Natural killer cell (primary cell): ENCODE measurements at regions of chr2 and their contacts with region 1.

Region 1: DNA sequence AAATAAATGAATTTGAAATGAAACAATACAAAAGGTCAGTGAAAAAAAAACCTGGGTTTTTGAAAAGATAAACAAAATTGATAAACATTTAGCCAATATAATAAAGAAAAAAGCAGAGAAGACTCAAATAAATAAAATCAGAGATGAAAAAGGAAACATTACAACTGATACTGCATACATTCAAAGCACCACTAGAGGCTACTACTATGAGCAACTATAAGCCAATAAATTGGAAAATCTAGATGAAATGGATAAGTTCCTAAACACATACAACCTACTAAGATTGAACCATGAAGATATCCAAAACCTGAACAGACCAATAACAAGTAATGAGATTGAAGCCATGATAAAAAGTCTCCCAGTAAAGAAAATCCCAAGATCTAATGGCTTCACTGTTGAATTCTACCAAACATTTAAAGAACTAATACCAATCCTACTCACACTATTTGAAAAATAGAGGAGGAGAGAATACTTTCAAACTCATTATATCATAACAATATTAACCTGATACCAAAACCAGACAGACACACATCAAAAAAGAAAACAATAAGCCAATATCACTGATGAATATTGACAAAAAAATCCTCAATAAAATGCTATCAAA is 80.8 kb upstream of the CERS6 start:
- DNase-seq: no peak
- ATAC-seq: no peak
- H3K4me3 ChIP-seq: no peak overlapping the region
- H3K4me3 Mint-ChIP-seq: no peak overlapping the region
- H3K27ac ChIP-seq: no peak overlapping the region
- H3K27ac Mint-ChIP-seq: no peak overlapping the region
- H3K4me1 ChIP-seq: peaks cover 28% of the 10 kb centered on the region
- H3K4me1 Mint-ChIP-seq: peaks cover 53 to 80% of the 10 kb centered on the region in 2 donors
- H3K27me3 ChIP-seq: no peaks in the 10 kb centered on the region
- H3K27me3 Mint-ChIP-seq: no peaks in the 10 kb centered on the region
- CTCF ChIP-seq: peak; percentile 14

Region 2: GRCh38 chr2:168455648-168456520 is 80.6 kb after region 1 on chr2 and contains the start of gene CERS6:
- intact Hi-C with region 1: loop called (anchors 2 kb)
- DNase-seq: peak; percentile 79 to 81
- ATAC-seq: peak; percentile 96 to 97 (median 96)
- H3K4me3 ChIP-seq: peak within 1 kb of the TSS; percentile 92
- H3K4me3 Mint-ChIP-seq: no peak within 1 kb of the TSS
- H3K27ac ChIP-seq: peak within 1 kb of the TSS; percentile 43
- H3K27ac Mint-ChIP-seq: peak within 1 kb of the TSS in 1 of 2 donors; percentile 27
- H3K4me1 ChIP-seq: peaks cover 15% of the 10 kb centered on the region
- H3K4me1 Mint-ChIP-seq: peaks cover 27% of the 10 kb centered on the region in 2 donors
- H3K27me3 ChIP-seq: no peaks in the 10 kb centered on the region
- H3K27me3 Mint-ChIP-seq: no peaks in the 10 kb centered on the region
- CTCF ChIP-seq: no peak
- total RNA-seq, gene CERS6: 9.1 to 13.5 (median 11.8) TPM

Region 3: DNA sequence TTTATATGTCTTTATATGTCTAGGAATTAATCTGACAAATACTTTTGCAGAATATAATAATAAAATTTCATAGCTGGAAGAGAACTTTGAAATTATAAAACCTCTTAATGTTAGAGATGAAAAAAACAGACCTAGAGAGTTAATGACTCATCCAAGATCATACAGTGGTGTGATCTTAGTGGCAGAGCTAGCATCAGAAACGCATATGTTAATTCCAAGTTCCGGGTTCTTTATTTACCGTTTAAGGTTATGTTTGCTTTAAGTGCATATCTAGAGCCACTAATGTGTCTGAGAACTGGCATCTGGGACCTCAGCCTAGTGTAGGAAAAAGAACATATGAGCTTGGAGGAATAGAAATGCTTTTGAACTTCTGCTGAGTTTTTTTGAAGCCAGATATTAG is 105.1 kb after region 1 on chr2:
- intact Hi-C with region 1: loop called (anchors 10 kb)
- DNase-seq: no peak
- ATAC-seq: no peak
- H3K4me3 ChIP-seq: no peak overlapping the region
- H3K4me3 Mint-ChIP-seq: no peak overlapping the region
- H3K27ac ChIP-seq: no peak overlapping the region
- H3K27ac Mint-ChIP-seq: no peak overlapping the region
- H3K4me1 ChIP-seq: no peaks in the 10 kb centered on the region
- H3K4me1 Mint-ChIP-seq: peaks cover 20 to 42% of the 10 kb centered on the region in 2 donors
- H3K27me3 ChIP-seq: no peaks in the 10 kb centered on the region
- H3K27me3 Mint-ChIP-seq: no peaks in the 10 kb centered on the region
- CTCF ChIP-seq: no peak

Region 4: DNA sequence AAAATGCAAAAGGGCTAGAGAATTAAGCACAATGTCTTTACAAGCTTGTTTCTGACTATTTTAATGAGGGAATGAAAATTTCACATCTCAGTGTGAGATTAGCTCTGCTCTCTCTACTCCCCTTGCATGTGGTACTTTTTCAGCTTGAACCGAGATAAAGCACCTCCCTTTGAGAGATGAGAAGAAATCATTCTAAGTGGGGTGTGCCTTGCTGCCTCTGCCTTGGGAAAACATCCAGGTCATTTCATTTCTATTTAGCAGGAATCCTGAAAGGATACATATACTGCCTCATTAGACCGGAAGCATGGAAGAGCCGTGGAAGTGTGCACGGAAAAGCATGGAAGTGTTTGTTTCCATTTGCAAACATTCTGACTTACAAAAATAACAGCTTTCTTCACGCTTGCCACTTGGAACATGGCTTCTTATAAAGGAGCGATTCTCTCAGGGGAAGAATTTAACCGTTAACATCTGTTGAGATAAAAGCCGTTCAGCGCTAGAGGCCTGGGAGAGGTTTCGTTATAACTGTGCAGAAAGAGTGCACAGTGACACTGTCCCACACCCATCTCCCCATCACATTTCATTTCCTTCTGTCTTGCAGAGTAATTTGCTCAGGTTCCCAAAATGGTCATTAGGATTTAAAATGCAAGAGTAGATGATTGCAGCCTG is 443.9 kb after region 1 on chr2:
- intact Hi-C with region 1: no loop called
- DNase-seq: no peak
- ATAC-seq: no peak
- H3K4me3 ChIP-seq: no peak overlapping the region
- H3K4me3 Mint-ChIP-seq: no peak overlapping the region
- H3K27ac ChIP-seq: no peak overlapping the region
- H3K27ac Mint-ChIP-seq: no peak overlapping the region
- H3K4me1 ChIP-seq: no peaks in the 10 kb centered on the region
- H3K4me1 Mint-ChIP-seq: no peaks in the 10 kb centered on the region
- H3K27me3 ChIP-seq: no peaks in the 10 kb centered on the region
- H3K27me3 Mint-ChIP-seq: no peaks in the 10 kb centered on the region
- CTCF ChIP-seq: no peak